Activated CD4-positive, alpha-beta T cell treated with anti-CD3 and anti-CD28 coated beads, Interleukin-2, amount 10 ng/mL, durations not matched to agents 24 days and 14 days (primary cell): ENCODE measurements at regions of chr5 and their contacts with region 1.

Region 1: GRCh38 chr5:113513384-113514288 is at the start of gene YTHDC2:
- DNase-seq: peak; percentile 96
- H3K4me3 Mint-ChIP-seq: peak within 1 kb of the TSS; percentile 87
- H3K27ac Mint-ChIP-seq: peak within 1 kb of the TSS; percentile 85
- H3K4me1 Mint-ChIP-seq: peaks cover 22% of the 10 kb centered on the region
- H3K27me3 Mint-ChIP-seq: peaks cover 16% of the 10 kb centered on the region
- total RNA-seq, gene YTHDC2: 26.0 and 26.3 TPM in 2 replicates

Region 2: GRCh38 chr5:112160652-112161391 is 1352.8 kb before region 1 on chr5:
- intact Hi-C with region 1: loop called (anchors 10 kb)
- DNase-seq: peak; percentile 98
- H3K4me3 Mint-ChIP-seq: peak overlapping the region; percentile 96
- H3K27ac Mint-ChIP-seq: peak overlapping the region; percentile 94
- H3K4me1 Mint-ChIP-seq: peaks cover 25% of the 10 kb centered on the region
- H3K27me3 Mint-ChIP-seq: peaks cover 2% of the 10 kb centered on the region

Region 3: DNA sequence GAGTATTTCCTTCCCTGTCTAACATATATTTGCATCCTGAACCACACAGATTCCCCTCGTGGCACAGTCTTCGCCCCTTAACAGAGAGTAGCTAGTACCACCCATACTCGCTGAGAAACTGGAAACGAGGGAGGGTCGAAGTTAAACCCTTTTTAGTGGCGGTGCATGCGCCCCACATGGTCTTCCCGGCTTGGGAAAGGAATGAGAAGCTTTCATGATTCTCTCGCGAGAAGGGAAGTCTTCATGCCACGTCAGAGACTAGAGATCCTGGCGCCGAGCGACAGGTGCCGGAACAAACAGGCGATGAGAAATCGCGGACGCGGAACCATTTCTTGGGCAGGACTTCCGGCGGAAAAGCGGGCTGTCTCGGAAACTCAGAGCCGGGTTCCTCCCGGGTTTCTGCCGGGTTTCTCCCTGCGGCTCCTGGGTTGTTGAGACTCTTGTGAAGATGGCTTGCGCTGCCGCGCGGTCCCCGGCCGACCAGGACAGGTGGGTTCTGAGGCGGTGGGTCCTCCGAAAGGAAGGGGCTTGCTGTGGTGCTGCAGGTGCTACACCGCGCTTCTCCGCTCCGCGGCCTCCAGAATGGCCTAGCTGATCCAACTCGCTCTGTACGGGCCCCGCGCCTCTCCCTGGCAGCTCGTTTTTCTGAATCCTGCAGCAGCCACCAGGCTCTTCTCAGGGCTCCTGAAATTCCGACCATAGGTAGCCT is 652.6 kb before region 1 on chr5 and contains the start of gene SRP19:
- intact Hi-C with region 1: loop called (anchors 1 kb)
- DNase-seq: peak; percentile 98
- H3K4me3 Mint-ChIP-seq: peak within 1 kb of the TSS; percentile 95
- H3K27ac Mint-ChIP-seq: peak within 1 kb of the TSS; percentile 94
- H3K4me1 Mint-ChIP-seq: peaks cover 18% of the 10 kb centered on the region
- H3K27me3 Mint-ChIP-seq: peaks cover 17% of the 10 kb centered on the region
- total RNA-seq, gene SRP19: 67.4 and 74.3 TPM in 2 replicates

Region 4: DNA sequence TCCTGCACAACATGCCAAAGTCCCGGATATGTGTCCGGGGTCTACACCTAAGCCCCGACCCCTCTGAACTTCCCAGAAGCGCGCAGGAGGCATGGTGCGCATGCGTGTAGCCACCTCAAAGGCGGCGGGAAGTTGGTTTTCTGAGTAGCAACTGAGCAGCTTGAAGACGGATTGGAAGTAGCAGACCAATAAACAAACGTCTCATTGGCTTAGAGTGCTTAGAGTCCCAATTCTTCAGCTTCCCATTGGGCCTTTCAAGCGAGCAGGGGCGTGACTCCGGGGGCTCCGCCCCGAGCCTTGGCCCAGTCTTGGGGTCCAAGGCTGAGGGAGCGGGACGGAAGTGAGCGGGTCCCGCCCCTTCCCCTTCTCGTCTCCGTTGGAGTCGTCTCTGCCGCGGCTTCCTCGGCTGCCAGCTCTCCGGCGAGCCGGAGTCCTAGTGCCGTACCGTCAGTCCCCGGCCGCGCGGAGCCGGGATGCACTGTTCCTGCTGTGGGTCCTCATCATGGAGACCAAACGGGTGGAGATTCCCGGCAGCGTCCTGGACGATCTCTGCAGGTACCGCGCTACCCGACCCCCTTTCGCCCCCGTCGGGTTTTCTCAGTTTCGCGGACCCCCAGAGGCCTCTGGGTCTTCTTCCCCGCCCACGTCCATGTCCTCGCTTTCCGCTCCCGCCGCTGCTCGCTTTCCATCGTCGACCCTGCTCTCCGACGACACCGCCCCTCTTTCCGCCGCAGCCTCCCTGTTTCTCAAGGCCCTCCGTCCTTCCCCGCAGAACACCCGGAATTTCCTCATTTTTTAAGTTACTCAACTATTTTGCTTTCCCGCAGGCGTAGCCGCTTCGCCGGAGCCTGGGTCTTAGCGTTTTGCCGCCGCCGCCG is 537.0 kb before region 1 on chr5 and contains the start of gene DCP2:
- intact Hi-C with region 1: loop called (anchors 5 kb)
- DNase-seq: peak; percentile 99
- H3K4me3 Mint-ChIP-seq: peak within 1 kb of the TSS; percentile 93
- H3K27ac Mint-ChIP-seq: peak within 1 kb of the TSS; percentile 94
- H3K4me1 Mint-ChIP-seq: peaks cover 35% of the 10 kb centered on the region
- H3K27me3 Mint-ChIP-seq: no peaks in the 10 kb centered on the region
- total RNA-seq, gene DCP2: 73.6 and 78.8 TPM in 2 replicates

Region 5: GRCh38 chr5:113294311-113295110 is 219.1 kb before region 1 on chr5:
- intact Hi-C with region 1: loop called (anchors 5 kb)
- DNase-seq: peak; percentile 92
- H3K4me3 Mint-ChIP-seq: peak overlapping the region; percentile 89
- H3K27ac Mint-ChIP-seq: peak overlapping the region; percentile 30
- H3K4me1 Mint-ChIP-seq: peaks cover 15% of the 10 kb centered on the region
- H3K27me3 Mint-ChIP-seq: peaks cover 71% of the 10 kb centered on the region

Region 6: DNA sequence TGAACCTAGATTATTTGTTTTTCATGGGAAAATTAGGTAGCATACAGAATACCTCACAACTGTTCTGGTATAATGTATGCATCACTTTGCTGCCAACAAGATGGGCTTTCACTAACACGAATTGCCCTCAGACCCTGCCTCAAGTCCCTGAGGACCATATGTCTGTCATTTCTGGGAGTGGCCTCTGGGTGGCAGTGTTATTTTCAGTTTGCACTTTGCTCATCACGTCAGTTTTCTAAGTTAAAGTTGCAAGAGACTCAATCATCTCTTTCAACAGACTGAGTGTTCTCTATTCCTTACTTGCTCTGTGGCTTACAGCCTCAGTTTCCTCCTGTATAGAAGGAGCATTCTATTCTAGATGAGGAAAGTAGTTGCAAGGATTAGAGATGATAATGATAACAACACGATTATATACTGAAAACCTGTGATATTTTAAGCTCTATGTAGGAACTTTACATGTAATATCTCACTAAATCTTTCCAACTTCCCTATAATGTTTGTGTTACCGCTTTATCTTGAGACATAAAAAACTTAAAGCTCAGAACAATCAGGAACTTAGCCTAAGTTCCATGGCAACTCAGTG is 134.6 kb before region 1 on chr5:
- intact Hi-C with region 1: loop called (anchors 1 kb)
- DNase-seq: peak; percentile 88
- H3K4me3 Mint-ChIP-seq: peak overlapping the region; percentile 64
- H3K27ac Mint-ChIP-seq: no peak overlapping the region
- H3K4me1 Mint-ChIP-seq: peaks cover 32% of the 10 kb centered on the region
- H3K27me3 Mint-ChIP-seq: peaks cover 18% of the 10 kb centered on the region